Activated T-helper 1 cell treated with anti-CD3 and anti-CD28 coated beads, Interleukin-12 subunit alpha, Interleukin-12 subunit beta, Interleukin-2, Interleukin-4 antibody, amounts not matched to agents 30 ng/mL and 10 ng/mL and 1 ng/mL, durations not matched to agents 14 hours and 24 hours and 36 hours (primary cell): ENCODE measurements at regions of chr2 and their contacts with region 1.

Region 1: GRCh38 chr2:68121873-68122679 is 35.6 kb upstream of the PNO1 start:
- DNase-seq: peak; percentile 50
- H3K4me3 Mint-ChIP-seq: no peak overlapping the region
- H3K27ac Mint-ChIP-seq: no peak overlapping the region
- H3K4me1 Mint-ChIP-seq: peaks cover 5% of the 10 kb centered on the region
- H3K27me3 Mint-ChIP-seq: peaks cover under 1% of the 10 kb centered on the region

Region 2: DNA sequence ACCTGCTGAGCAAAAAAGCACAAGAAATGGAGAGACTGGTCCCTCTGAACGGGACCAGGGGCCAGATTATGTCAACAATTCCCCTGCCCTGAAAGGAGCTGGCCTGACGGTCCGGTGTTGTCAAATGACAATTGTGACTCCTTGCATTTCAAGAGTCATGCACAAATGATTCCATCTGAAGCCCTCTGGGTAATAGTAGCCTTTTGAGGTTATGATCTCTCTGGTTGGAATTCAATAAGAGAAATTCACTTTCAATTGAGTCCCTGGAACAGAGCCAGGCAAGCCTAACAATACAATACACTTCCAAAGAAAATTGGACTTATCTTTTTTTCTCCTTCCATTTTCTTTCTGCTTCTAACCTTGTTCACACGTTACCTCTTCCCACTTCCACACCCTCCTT is 176.1 kb before region 1 on chr2:
- intact Hi-C with region 1: no loop called
- DNase-seq: no peak
- H3K4me3 Mint-ChIP-seq: no peak overlapping the region
- H3K27ac Mint-ChIP-seq: no peak overlapping the region
- H3K4me1 Mint-ChIP-seq: no peaks in the 10 kb centered on the region
- H3K27me3 Mint-ChIP-seq: peaks cover 2% of the 10 kb centered on the region

Region 3: DNA sequence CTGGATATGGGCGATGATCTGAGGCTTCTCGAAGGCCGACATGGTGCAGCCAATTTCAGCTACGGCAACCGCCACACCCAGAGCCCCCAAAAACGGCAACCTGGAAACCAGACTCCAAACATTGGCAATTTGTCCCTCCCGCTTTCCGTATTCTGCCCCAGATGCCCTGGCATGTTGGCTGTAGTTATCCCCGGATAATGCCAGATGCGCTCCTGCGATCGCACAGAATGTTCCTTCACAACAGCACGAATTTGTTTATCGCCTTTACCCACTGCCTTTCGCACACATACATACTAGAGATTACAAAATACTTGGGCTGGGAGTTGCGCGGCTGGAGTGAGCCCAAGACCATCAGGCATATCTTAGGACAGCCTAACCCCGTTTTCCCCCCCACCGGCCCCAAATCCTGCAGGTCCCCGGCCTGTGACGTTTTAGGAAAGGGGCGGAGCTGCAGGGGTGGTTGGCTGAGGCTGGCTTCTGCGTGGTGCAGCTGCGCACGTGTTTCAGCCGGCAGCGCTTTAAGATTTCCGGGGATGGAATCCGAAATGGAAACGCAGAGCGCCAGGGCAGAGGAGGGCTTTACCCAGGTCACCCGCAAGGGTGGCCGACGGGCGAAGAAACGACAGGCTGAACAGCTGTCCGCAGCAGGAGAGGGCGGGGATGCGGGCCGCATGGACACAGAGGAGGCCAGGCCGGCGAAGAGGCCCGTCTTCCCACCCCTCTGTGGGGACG is 35.5 kb after region 1 on chr2 and contains the start of gene PNO1:
- intact Hi-C with region 1: loop called (anchors 1 kb)
- DNase-seq: peak; percentile 96
- H3K4me3 Mint-ChIP-seq: peak within 1 kb of the TSS; percentile 90
- H3K27ac Mint-ChIP-seq: peak within 1 kb of the TSS; percentile 100
- H3K4me1 Mint-ChIP-seq: peaks cover 37% of the 10 kb centered on the region
- H3K27me3 Mint-ChIP-seq: no peaks in the 10 kb centered on the region
- total RNA-seq, gene PNO1: 31.3 and 33.4 TPM in 2 replicates

Region 4: DNA sequence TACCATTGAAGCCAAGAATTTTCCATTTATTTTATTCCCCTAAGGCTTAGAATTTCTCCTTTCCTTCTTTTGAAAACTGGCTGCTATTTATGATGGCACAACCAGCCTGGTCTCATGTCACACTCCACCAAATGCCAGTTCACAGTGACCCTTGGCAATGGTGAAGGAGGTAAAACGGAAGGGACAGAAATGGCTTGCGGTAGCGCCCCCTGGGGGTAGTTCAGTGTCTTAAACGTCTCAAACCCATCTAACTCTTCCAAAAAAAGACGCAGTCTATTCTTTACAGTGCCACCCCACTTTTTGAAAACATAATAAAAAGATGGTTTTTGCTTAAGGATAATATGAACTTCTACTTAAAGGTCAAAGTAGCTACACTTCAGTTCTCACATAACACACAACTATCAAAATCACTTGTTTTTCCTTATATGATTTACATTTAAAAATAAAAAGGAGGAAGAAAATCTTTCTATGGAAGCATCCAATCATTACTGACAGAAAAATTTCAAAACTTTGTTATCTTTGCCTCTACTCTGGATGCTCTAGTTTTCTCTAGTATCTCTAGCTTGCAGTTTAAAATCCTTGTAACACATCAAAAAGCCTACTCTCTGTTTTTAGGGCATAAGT is 63.6 kb after region 1 on chr2:
- intact Hi-C with region 1: loop called (anchors 1 kb)
- DNase-seq: peak; percentile 28
- H3K4me3 Mint-ChIP-seq: no peak overlapping the region
- H3K27ac Mint-ChIP-seq: no peak overlapping the region
- H3K4me1 Mint-ChIP-seq: peaks cover 23% of the 10 kb centered on the region
- H3K27me3 Mint-ChIP-seq: no peaks in the 10 kb centered on the region

Region 5: GRCh38 chr2:68282811-68283418 is 160.8 kb after region 1 on chr2:
- intact Hi-C with region 1: loop called (anchors 1 kb)
- DNase-seq: no peak
- H3K4me3 Mint-ChIP-seq: no peak overlapping the region
- H3K27ac Mint-ChIP-seq: no peak overlapping the region
- H3K4me1 Mint-ChIP-seq: no peaks in the 10 kb centered on the region
- H3K27me3 Mint-ChIP-seq: peaks cover 45% of the 10 kb centered on the region

Region 6: DNA sequence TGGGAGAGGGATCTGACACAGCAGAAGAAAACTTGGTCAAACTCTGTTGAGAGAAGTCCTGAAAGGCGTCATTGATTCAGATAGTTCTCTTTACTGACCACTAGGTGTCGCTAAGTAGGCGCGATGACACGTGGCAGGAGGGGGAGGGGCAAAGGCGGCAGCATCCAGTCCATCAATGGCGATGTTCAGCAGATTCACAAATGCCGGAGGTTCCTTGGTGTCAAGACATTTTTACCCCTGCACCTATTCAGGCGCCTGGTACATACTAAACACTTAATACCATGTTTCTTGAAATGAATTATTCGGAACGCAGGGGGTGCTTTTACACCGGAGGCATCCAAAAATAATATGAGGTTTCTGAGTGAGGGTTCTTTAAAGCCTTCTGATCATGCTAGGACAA is 240.0 kb after region 1 on chr2:
- intact Hi-C with region 1: loop called (anchors 5 kb)
- DNase-seq: peak; percentile 65
- H3K4me3 Mint-ChIP-seq: peak overlapping the region; percentile 32
- H3K27ac Mint-ChIP-seq: peak overlapping the region; percentile 36
- H3K4me1 Mint-ChIP-seq: peaks cover 26% of the 10 kb centered on the region
- H3K27me3 Mint-ChIP-seq: peaks cover 12% of the 10 kb centered on the region